ENCODE measurements at regions of chr10 and their contacts with region 1.

Region 1: DNA sequence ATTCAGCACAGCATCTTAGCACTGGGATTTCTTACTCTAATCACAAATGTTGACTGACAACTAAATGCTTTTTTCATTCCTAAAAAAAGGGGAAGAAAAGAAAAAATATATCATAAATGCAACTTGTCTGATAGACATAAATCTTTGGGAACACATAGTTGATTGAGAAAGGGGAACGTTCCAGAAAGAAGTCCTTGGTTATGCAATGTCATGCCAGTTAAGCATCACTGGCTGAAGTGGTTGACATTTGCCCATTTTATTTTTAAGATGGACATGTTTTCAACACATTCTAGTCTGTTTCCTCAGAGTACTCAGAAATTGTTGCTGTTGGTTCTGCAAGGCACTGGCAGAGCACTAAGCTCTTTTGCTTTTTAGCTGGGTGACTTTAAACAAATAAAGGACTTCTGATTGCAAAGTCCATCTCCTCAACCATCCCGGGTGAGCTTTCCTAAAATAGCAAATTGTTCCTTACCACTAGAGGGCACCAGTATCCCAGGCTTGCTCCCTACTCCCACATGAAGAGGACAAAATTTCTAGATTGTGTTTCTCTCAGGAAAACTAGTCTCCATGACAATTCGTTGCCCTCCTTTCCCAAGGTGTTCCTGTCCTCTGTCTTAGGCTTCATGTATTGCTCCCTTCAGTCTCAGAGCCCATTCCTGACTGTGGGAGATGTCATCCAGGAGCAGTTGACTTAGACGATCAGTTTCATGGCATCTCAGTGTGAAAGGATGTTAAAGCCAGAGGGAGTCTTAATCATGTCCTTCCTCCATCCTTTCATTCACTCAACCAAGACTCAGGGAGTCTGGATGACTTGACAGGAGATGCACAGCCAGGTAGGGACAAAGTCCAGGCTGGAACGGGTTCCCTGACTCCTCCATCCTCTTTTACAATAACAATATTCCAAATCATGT is 23.9 kb downstream of the OPALIN start:
- DNase-seq: no peak
- ATAC-seq: no peak; the same call in 2 of the 3 replicates
- H3K4me3 ChIP-seq: no peak overlapping the region
- H3K27ac ChIP-seq: no peak overlapping the region
- H3K4me1 ChIP-seq: no peaks in the 10 kb centered on the region
- H3K27me3 ChIP-seq: no peaks in the 10 kb centered on the region
- CTCF ChIP-seq: peak; percentile 62 to 77 (median 62); a peak in 5 of 6 replicates
- EP300 ChIP-seq: no peak
- POLR2A ChIP-seq: no peak
- RAD21 ChIP-seq: peak; percentile 47

Region 2: DNA sequence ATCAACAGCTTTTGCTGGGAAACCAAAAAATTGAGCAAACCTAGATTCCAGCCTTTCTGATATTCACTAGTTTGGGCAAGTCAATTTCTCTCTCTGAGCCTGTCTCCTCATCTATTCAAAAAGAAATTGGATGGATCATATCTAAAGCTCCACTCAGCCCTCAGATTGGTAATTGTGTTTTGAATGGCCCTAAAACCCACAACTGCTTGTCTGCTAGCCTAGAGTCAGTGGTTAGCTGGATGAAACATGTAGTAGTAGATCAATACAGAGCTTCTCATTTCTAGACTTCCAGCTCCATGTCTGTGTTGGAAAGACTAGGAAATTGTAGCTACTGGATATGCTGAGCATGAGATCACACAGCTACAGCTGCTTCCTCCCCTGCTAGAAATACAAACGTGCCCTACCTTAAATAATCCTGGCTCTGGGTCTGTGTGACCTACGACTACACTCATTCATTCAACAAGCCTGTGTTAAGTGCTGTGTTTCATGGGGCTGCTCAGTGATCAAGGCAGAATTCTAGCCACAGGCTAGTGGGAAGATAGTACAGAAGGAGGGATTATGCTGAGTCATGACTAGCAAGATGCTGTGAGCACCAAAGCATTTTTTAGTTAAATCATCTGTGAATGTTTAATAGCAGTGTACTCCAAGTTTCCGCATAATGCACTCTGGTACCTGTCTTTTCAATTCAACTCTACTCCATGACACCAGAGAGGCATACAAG is 15.0 kb before region 1 on chr10:
- CTCF ChIA-PET with region 1: interaction called, 15 read pairs
- POLR2A ChIA-PET with region 1: interaction called, 3 read pairs
- RAD21 ChIA-PET with region 1: interaction called, 4 read pairs
- SMC1A ChIA-PET with region 1: interaction called, 3 read pairs
- in situ Hi-C with region 1: no loop called
- intact Hi-C with region 1: no loop called
- DNase-seq: no peak
- ATAC-seq: no peak
- H3K4me3 ChIP-seq: no peak overlapping the region
- H3K27ac ChIP-seq: no peak overlapping the region
- H3K4me1 ChIP-seq: no peaks in the 10 kb centered on the region
- H3K27me3 ChIP-seq: no peaks in the 10 kb centered on the region
- CTCF ChIP-seq: no peak
- EP300 ChIP-seq: no peak
- POLR2A ChIP-seq: no peak
- RAD21 ChIP-seq: no peak

Region 3: GRCh38 chr10:96346295-96346694 is 11.4 kb after region 1 on chr10:
- CTCF ChIA-PET with region 1: interaction called, 13 read pairs
- POLR2A ChIA-PET with region 1: no interaction called
- RAD21 ChIA-PET with region 1: interaction called, 3 read pairs
- SMC1A ChIA-PET with region 1: interaction called, 3 read pairs
- in situ Hi-C with region 1: no loop called
- intact Hi-C with region 1: no loop called
- DNase-seq: no peak
- ATAC-seq: no peak
- H3K4me3 ChIP-seq: no peak overlapping the region
- H3K27ac ChIP-seq: no peak overlapping the region
- H3K4me1 ChIP-seq: no peaks in the 10 kb centered on the region
- H3K27me3 ChIP-seq: no peaks in the 10 kb centered on the region
- CTCF ChIP-seq: no peak
- EP300 ChIP-seq: no peak
- POLR2A ChIP-seq: no peak
- RAD21 ChIP-seq: no peak

Measured in GM12878 (cell line).